Mammary epithelial cell (primary cell): ENCODE measurements at regions of chr17 and their contacts with region 1.

Region 1: GRCh38 chr17:67376737-67377487 is at the start of gene PITPNC1:
- DNase-seq: peak; percentile 85
- H3K4me3 ChIP-seq: peak within 1 kb of the TSS; percentile 59 to 97 (median 96)
- H3K27ac ChIP-seq: peak within 1 kb of the TSS; percentile 72
- H3K4me1 ChIP-seq: peaks cover 12% of the 10 kb centered on the region
- H3K27me3 ChIP-seq: no peaks in the 10 kb centered on the region
- CTCF ChIP-seq: no peak
- total RNA-seq, gene PITPNC1: 5.7 to 35.8 TPM

Region 2: DNA sequence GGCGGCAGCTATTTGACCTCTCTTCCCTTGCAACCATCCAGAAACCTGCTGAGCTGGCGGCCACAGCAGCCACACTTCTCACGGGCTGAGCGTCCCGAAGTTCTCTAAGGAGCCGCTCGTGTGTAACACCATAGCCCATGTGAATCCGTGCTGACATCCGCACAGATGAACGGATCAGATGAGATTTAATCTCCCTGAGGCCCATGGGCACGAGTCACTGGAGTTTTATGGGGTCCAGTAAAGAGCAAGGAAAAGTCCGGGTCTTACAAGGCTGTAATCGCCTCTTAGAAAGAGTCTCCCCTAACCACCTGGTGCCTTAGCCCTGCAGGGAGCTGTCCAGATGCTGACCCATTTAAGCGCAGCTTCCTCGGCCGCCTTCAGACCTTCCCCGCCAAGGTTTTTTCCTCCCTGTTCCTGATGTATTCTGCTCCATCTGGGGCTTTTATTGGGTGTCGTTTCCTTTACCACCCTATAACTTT is 547.5 kb before region 1 on chr17:
- CTCF ChIA-PET with region 1: no interaction called
- dilution Hi-C with region 1: no loop called
- in situ Hi-C with region 1: no loop called
- intact Hi-C with region 1: no loop called
- DNase-seq: peak; percentile 44
- H3K4me3 ChIP-seq: no peak overlapping the region
- H3K27ac ChIP-seq: no peak overlapping the region
- H3K4me1 ChIP-seq: no peaks in the 10 kb centered on the region
- H3K27me3 ChIP-seq: peaks cover 3% of the 10 kb centered on the region
- CTCF ChIP-seq: no peak

Region 3: GRCh38 chr17:66915204-66916096 is 461.5 kb before region 1 on chr17:
- CTCF ChIA-PET with region 1: no interaction called
- dilution Hi-C with region 1: no loop called
- in situ Hi-C with region 1: no loop called
- intact Hi-C with region 1: loop called (anchors 10 kb)
- DNase-seq: peak; percentile 64
- H3K4me3 ChIP-seq: no peak overlapping the region
- H3K27ac ChIP-seq: no peak overlapping the region
- H3K4me1 ChIP-seq: peaks cover 6% of the 10 kb centered on the region
- H3K27me3 ChIP-seq: no peaks in the 10 kb centered on the region
- CTCF ChIP-seq: peak; percentile 74 to 86

Region 4: GRCh38 chr17:67452681-67453554 is 76.0 kb after region 1 on chr17:
- CTCF ChIA-PET with region 1: no interaction called
- dilution Hi-C with region 1: no loop called
- in situ Hi-C with region 1: no loop called
- intact Hi-C with region 1: no loop called
- DNase-seq: no peak
- H3K4me3 ChIP-seq: no peak overlapping the region
- H3K27ac ChIP-seq: no peak overlapping the region
- H3K4me1 ChIP-seq: no peaks in the 10 kb centered on the region
- H3K27me3 ChIP-seq: no peaks in the 10 kb centered on the region
- CTCF ChIP-seq: no peak

Region 5: DNA sequence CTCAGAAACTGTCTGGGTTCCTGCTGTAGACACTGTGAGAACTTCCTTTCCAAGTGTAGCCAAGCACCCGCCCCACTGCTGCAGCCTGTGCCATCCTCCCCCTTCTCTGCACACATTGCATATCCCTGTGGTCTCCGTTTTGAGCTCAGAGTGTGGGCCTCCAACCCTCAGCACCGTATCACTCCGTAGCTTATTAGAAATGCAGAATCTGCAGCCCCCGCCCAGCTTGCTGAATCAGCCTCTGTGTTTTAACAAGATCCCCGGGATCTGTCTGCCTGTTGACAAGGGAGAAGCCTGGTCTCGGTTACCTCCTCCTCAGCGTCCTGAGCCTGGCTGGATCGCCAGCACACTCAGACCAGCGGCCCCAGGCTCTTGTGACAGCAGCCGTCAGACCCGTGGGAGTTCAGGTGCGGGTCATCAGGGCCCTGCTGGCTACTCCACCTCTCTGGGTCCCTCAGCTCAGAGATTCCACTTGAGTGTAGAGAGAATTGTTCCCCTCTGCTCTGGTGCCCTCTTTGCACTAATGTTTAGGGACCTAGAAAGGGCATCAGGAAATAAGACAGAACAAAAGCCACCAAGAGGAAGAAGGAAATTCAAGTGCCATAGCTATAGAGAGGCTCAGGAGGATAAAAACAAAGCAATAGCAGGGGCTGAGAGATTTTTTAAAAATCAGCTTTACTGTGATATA is 92.4 kb after region 1 on chr17:
- CTCF ChIA-PET with region 1: no interaction called
- dilution Hi-C with region 1: no loop called
- in situ Hi-C with region 1: loop called in 1 of 2 experiments (anchors 5 kb)
- intact Hi-C with region 1: no loop called
- DNase-seq: no peak
- H3K4me3 ChIP-seq: no peak overlapping the region
- H3K27ac ChIP-seq: no peak overlapping the region
- H3K4me1 ChIP-seq: no peaks in the 10 kb centered on the region
- H3K27me3 ChIP-seq: no peaks in the 10 kb centered on the region
- CTCF ChIP-seq: no peak

Region 6: GRCh38 chr17:67546578-67547527 is 169.9 kb after region 1 on chr17:
- CTCF ChIA-PET with region 1: no interaction called
- dilution Hi-C with region 1: no loop called
- in situ Hi-C with region 1: no loop called
- intact Hi-C with region 1: no loop called
- DNase-seq: no peak
- H3K4me3 ChIP-seq: no peak overlapping the region
- H3K27ac ChIP-seq: no peak overlapping the region
- H3K4me1 ChIP-seq: no peaks in the 10 kb centered on the region
- H3K27me3 ChIP-seq: no peaks in the 10 kb centered on the region
- CTCF ChIP-seq: no peak

Region 7: GRCh38 chr17:67602956-67603355 is 226.0 kb after region 1 on chr17:
- CTCF ChIA-PET with region 1: interaction called, 3 read pairs
- dilution Hi-C with region 1: no loop called
- in situ Hi-C with region 1: no loop called
- intact Hi-C with region 1: loop called (anchors 1 kb)
- DNase-seq: peak; percentile 20
- H3K4me3 ChIP-seq: no peak overlapping the region
- H3K27ac ChIP-seq: no peak overlapping the region
- H3K4me1 ChIP-seq: no peaks in the 10 kb centered on the region
- H3K27me3 ChIP-seq: no peaks in the 10 kb centered on the region
- CTCF ChIP-seq: peak; percentile 36 to 52

Region 8: DNA sequence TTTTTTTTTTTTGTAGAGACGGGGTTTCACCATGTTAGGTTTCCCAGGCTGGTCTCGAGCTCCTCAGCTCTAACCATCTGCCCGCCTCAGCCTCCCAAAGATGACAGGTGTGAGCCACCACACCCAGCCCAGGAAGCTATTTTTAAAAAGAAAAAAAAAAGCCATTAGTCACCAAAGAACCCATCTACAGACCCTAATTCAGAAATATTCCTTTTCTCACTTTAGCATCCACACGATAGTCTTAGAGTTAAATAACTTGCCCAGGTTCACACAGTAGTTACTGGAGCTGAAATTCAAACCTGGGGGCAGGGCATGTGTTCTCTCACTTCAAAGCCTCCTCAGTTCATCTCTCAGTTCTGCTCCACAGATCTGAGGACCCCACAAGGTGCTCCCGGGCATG is 270.6 kb after region 1 on chr17:
- CTCF ChIA-PET with region 1: interaction called, 11 read pairs
- dilution Hi-C with region 1: no loop called
- in situ Hi-C with region 1: no loop called
- intact Hi-C with region 1: no loop called
- DNase-seq: no peak
- H3K4me3 ChIP-seq: no peak overlapping the region
- H3K27ac ChIP-seq: no peak overlapping the region
- H3K4me1 ChIP-seq: no peaks in the 10 kb centered on the region
- H3K27me3 ChIP-seq: no peaks in the 10 kb centered on the region
- CTCF ChIP-seq: no peak

Region 9: GRCh38 chr17:67717624-67718329 is 340.9 kb after region 1 on chr17 and contains the start of gene NOL11:
- CTCF ChIA-PET with region 1: no interaction called
- dilution Hi-C with region 1: no loop called
- in situ Hi-C with region 1: no loop called
- intact Hi-C with region 1: loop called (anchors 1 kb)
- DNase-seq: peak; percentile 97
- H3K4me3 ChIP-seq: peak within 1 kb of the TSS; percentile 81 to 90 (median 81)
- H3K27ac ChIP-seq: peak within 1 kb of the TSS; percentile 85
- H3K4me1 ChIP-seq: peaks cover 16% of the 10 kb centered on the region
- H3K27me3 ChIP-seq: no peaks in the 10 kb centered on the region
- CTCF ChIP-seq: peak; percentile 81 to 98
- total RNA-seq, gene NOL11: 36.5 to 40.6 TPM